Left colon (tissue), 2 donors: ENCODE measurements at regions of chr1 and their contacts with region 1.

Region 1: GRCh38 chr1:203486618-203487370 is 7.2 kb upstream of the OPTC start:
- DNase-seq: no peak
- ATAC-seq: no peak

Region 2: GRCh38 chr1:203340112-203340804 is 146.5 kb before region 1 on chr1:
- intact Hi-C with region 1: loop called in 1 of 2 experiments (anchors 5 kb)
- DNase-seq: peak; percentile 69 to 77
- ATAC-seq: peak; percentile 76

Region 3: DNA sequence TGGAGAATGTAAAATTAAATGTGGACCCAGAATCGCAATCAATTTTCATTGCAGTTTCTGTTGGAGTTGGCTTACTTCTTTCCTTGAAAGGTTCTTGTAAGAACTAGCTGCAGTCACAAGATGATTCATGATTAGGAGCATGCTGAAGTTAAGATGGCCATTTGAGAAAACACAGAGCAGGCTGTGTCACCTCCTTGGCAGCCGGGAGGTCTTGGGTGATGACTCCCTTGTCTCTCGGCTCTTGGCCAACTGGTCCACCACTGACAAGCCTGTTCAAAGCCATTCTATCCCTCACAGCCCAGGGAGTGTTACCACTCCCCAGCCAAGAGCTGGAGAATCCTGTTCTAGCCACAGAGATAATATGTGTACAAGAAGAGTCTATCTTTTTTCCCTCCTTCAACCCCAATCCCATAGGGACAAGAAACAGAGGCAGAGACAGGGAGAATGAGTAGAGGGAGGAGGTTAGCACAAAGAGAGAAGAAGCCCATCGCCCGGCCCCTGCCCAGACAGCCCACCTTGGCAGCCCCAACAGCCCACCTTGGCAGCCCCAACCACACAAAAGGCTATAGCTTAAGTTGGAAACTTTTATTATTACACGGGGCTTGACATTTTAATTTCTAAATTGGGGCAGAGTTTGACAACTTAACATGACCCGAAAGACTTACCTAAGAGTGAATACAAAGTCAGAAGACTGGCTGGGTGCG is 47.9 kb after region 1 on chr1:
- intact Hi-C with region 1: no loop called
- DNase-seq: peak; percentile 37 to 86
- ATAC-seq: peak; percentile 11